Right ventricle myocardium inferior (tissue), 1 donor: ENCODE measurements at regions of chr16 and their contacts with region 1.

Region 1: GRCh38 chr16:73329363-73330292 is 281.7 kb upstream of the ZFHX3 start:
- DNase-seq: no peak
- ATAC-seq: no peak

Region 2: DNA sequence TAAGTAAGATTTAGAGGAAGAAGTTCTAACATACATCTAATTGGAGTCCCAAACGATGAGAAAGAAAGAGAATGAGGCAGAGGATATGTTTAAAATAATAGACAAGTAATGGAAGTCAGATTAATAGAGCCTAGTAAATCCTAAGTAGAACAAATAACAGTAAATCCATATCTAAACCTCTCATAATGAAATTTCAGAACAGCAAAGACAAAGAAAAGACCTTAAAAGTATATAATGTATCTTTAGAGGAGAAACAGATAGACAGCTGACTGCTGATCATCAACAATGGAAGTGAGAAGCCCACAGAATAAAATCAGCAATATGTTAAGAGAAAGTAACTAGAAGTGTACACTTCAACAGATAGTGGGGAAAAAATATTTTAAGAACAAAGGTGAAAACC is 254.5 kb after region 1 on chr16:
- intact Hi-C with region 1: loop called (anchors 10 kb)
- DNase-seq: no peak
- ATAC-seq: no peak